Activated naive CD4-positive, alpha-beta T cell treated with anti-CD3 and anti-CD28 coated beads for 36 hours (primary cell): ENCODE measurements at regions of chr3 and their contacts with region 1.

Region 1: DNA sequence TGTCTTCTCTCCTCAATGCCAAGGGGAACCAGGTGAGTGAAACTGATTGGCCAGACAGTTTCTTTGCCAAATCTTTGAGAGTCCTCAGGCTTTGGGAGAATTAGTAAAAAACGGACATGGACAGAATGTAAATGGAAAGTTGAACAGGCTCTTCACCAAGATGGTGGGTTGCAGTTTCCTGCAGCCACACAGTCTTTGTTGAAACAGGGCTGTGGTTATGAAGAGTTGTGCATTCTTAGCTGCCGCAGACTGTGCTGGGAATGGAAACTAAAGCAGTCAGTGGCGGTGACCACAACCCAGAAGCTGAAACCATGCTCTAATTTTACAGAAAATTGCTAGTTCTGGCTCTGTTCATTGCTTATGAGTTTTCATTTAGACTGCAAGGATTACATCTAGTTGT is 42.1 kb upstream of the TASOR start:
- DNase-seq: peak; percentile 83
- H3K4me3 Mint-ChIP-seq: peak overlapping the region; percentile 61
- H3K27ac Mint-ChIP-seq: peak overlapping the region; percentile 91
- H3K4me1 Mint-ChIP-seq: peaks cover 35% of the 10 kb centered on the region
- H3K27me3 Mint-ChIP-seq: no peaks in the 10 kb centered on the region

Region 2: DNA sequence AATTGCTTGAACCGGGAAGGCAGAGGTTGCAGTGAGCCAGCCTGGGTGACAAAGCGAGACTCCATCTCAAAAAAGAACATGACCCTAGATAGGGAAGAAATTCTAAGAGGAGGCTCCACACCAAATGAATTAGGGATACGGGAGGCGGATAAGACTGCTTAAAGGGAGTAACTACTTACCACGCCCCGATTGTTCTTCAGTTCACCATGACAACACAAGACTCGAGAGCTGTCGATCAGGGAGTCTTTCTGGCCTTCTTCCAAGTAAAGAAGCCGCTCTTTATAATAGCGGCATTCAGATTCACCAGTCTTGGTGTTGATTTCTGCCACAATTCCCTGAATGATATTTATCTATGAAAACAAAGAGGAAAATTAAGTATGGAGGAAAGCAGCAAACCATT is 11.8 kb after region 1 on chr3:
- CTCF ChIA-PET with region 1: interaction called, 3 read pairs
- intact Hi-C with region 1: loop called (anchors 2 kb)
- DNase-seq: no peak
- H3K4me3 Mint-ChIP-seq: no peak overlapping the region
- H3K27ac Mint-ChIP-seq: no peak overlapping the region
- H3K4me1 Mint-ChIP-seq: peaks cover 38% of the 10 kb centered on the region
- H3K27me3 Mint-ChIP-seq: no peaks in the 10 kb centered on the region

Region 3: GRCh38 chr3:56783644-56784447 is 58.7 kb after region 1 on chr3:
- CTCF ChIA-PET with region 1: no interaction called
- intact Hi-C with region 1: loop called (anchors 1 kb)
- DNase-seq: peak; percentile 88
- H3K4me3 Mint-ChIP-seq: peak overlapping the region; percentile 70
- H3K27ac Mint-ChIP-seq: peak overlapping the region; percentile 98
- H3K4me1 Mint-ChIP-seq: peaks cover 95% of the 10 kb centered on the region
- H3K27me3 Mint-ChIP-seq: no peaks in the 10 kb centered on the region